Tibial artery (tissue), 4 donors: ENCODE measurements at regions of chr12 and their contacts with region 1.

Region 1: GRCh38 chr12:123232807-123233543 is at the starts of genes MPHOSPH9 and MTRFR:
- DNase-seq: peak; percentile 99 to 100
- H3K4me3 ChIP-seq: peak within 1 kb of the TSS; percentile 81 to 89
- H3K27ac ChIP-seq: peak within 1 kb of the TSS; percentile 90 to 95
- H3K4me1 ChIP-seq: peaks cover 0 to 40% (median 24%) of the 10 kb centered on the region in 4 donors
- H3K27me3 ChIP-seq: peaks cover 0 to 4% of the 10 kb centered on the region in 2 donors
- CTCF ChIP-seq: peak in 1 of 2 experiments; percentile 8

Region 2: GRCh38 chr12:122965851-122966722 is 266.9 kb before region 1 on chr12 and contains the start of gene ABCB9:
- intact Hi-C with region 1: loop called (anchors 2 kb)
- DNase-seq: peak; percentile 88 to 95
- H3K4me3 ChIP-seq: peak within 1 kb of the TSS; percentile 54 to 58
- H3K27ac ChIP-seq: peak within 1 kb of the TSS; percentile 24 to 42
- H3K4me1 ChIP-seq: peaks cover 9 to 41% (median 27%) of the 10 kb centered on the region in 4 donors
- H3K27me3 ChIP-seq: no peaks in the 10 kb centered on the region
- CTCF ChIP-seq: no peak

Region 3: DNA sequence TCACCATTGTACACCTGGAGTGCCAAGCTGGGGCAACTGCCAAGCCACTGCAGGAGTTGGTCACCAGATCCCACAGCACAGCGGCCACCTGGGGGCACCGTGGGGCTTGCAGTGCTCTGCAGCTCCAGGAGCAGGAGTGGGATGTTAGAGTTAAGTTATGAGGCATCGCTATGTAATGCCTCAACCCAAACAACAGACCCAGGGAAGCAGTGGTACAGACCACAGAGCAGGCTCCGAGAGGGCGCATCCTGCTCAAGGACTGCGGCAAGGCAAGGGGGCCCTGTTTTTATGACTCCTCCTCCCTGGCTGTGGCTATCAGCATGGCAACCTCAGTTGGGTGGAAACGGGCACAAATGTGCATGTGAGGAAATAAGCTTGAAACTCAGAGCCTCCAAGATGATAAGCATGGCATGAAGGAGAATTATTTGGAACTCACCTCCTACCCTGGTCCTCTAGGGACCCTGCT is 189.4 kb before region 1 on chr12:
- intact Hi-C with region 1: loop called (anchors 2 kb)
- DNase-seq: peak; percentile 79 to 92
- H3K4me3 ChIP-seq: no peak overlapping the region
- H3K27ac ChIP-seq: peak overlapping the region; percentile 56 to 62
- H3K4me1 ChIP-seq: peaks cover 0 to 14% (median 12%) of the 10 kb centered on the region in 4 donors
- H3K27me3 ChIP-seq: no peaks in the 10 kb centered on the region
- CTCF ChIP-seq: peak; percentile 78 to 86